ENCODE measurements at regions of chr15 and their contacts with region 1.

Region 1: DNA sequence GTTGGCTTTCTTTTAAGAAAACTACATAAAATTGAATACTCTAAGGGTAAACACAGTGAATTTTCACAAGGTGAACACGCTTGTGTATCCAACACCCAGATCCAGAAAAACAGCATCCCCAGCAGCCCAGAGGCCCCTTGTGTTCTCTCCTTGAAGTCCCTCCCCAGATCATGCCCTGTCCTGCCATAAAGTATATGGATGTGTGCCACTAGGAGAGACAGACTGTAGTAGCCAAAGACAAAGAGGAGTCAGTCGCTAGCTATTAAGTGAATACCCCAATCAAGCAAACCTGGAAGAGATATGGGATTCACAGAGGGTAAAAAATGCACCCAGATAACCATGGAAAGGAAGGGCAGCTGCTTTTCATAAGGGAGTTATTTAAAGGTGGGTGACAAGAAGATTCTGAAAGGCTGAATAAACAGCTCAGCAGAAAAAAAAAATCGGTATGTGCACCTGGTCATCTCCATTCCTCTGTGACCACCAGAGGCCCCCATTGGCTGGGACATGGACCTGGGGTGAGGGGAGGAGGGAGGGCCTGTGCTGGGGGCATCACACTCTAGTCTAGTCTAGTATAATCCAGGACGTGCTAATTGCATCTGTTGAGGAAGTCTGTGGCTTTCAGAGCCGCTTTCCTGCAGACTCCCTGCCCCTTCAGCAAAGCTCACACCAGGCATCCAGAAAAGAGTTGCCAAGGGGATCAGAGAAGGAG is 167.3 kb upstream of the NDN start:
- DNase-seq: no peak
- H3K4me3 ChIP-seq: no peak overlapping the region
- H3K27ac ChIP-seq: no peak overlapping the region
- H3K4me1 ChIP-seq: no peaks in the 10 kb centered on the region
- H3K27me3 ChIP-seq: no peaks in the 10 kb centered on the region
- CTCF ChIP-seq: no peak
- POLR2A ChIP-seq: no peak

Region 2: DNA sequence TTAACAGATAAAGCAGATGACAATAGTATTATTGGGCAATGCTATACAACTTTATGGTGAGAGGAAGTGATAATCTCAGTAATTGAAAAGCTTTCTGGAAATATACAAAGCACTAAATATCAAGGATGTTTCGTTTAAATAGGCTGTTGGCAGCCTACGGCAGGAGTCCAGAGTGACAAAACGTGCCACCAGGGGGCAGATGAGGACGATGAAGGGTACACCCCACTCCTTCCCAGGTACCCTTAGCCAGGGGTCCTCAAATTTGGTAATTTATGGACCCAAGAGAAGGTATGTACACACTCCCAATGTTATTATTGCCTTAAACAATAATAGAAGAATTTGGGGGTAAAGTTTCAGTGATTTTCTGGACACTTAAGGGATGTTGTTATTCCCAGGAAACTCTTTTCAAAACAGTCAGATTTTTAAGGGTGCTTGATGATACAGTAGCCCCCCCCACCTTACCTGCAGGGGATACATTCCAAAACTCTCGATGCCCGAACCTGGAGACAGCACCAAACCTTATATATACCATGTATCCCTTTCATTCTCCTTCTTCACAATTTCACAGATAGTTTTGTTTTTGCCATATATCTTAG is 205.3 kb before region 1 on chr15:
- intact Hi-C with region 1: loop called (anchors 5 kb)
- DNase-seq: peak; percentile 49
- H3K4me3 ChIP-seq: no peak overlapping the region
- H3K27ac ChIP-seq: no peak overlapping the region
- H3K4me1 ChIP-seq: no peaks in the 10 kb centered on the region
- H3K27me3 ChIP-seq: no peaks in the 10 kb centered on the region
- CTCF ChIP-seq: peak in 5 of 6 experiments; percentile 19 to 60 (median 43)
- POLR2A ChIP-seq: no peak

Region 3: DNA sequence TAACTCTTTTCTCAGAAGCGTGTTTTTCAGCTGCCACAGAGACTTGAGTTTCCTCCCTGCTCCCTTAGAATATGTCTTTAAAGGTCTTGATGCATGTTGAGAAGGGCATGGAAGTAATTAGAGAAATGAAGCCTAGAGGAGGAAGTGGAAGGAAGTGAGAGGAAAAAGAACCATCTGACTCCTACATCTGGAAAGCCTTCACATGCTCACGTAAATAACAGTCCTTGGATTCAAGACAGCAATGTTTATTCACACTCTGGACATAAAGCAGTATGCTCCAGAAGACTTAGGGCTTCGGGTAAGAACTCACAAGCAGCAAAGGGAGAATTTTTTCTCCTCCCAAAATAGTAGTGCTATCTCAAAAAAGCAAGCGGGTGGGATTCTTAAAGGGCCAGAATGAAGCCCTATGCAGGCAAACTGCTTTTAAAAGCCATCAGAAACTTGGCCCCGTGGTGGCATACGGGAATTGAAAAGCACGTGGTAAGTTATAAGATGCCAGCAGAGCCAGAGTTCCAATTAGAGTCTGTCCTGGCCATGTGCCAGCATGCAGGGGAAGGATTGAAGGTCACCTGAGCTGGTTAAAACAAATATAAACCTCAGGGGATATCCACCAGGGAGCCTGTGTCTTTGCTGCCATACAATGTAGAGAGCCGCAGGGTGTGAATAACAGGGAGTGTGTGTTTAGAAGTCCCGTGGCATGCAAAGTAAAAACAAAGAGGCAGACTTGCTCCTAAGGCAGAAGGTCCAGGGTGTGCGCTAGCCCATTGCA is 213.6 kb after region 1 on chr15:
- intact Hi-C with region 1: no loop called
- DNase-seq: peak; percentile 29 to 30
- H3K4me3 ChIP-seq: no peak overlapping the region
- H3K27ac ChIP-seq: no peak overlapping the region
- H3K4me1 ChIP-seq: no peaks in the 10 kb centered on the region
- H3K27me3 ChIP-seq: no peaks in the 10 kb centered on the region
- CTCF ChIP-seq: no peak
- POLR2A ChIP-seq: no peak

Measured in thyroid gland (tissue), 4 donors.